Ascending aorta (tissue), 2 donors: ENCODE measurements at regions of chr16 and their contacts with region 1.

Region 1: GRCh38 chr16:87062569-87063442 is 254.4 kb downstream of the C16orf95 start:
- DNase-seq: peak in 1 of 2 donors; percentile 89
- H3K4me3 ChIP-seq: peak overlapping the region; percentile 11 to 66
- H3K27ac ChIP-seq: peak overlapping the region; percentile 86 to 90
- H3K4me1 ChIP-seq: peaks cover 0 to 14% of the 10 kb centered on the region in 2 donors
- H3K27me3 ChIP-seq: no peaks in the 10 kb centered on the region
- CTCF ChIP-seq: peak; percentile 86 to 91 (median 88)

Region 2: GRCh38 chr16:86563489-86564345 is 499.1 kb before region 1 on chr16:
- intact Hi-C with region 1: loop called (anchors 1 kb)
- DNase-seq: peak; percentile 70 to 97
- H3K4me3 ChIP-seq: peak overlapping the region; percentile 76 to 79
- H3K27ac ChIP-seq: peak overlapping the region; percentile 91 to 98
- H3K4me1 ChIP-seq: peaks cover 0 to 4% of the 10 kb centered on the region in 2 donors
- H3K27me3 ChIP-seq: no peaks in the 10 kb centered on the region
- CTCF ChIP-seq: peak; percentile 100

Region 3: GRCh38 chr16:86680162-86680561 is 382.6 kb before region 1 on chr16:
- intact Hi-C with region 1: loop called (anchors 5 kb)
- DNase-seq: peak in 1 of 2 donors; percentile 87
- H3K4me3 ChIP-seq: peak overlapping the region in 1 of 2 donors; percentile 57
- H3K27ac ChIP-seq: peak overlapping the region; percentile 93 to 94
- H3K4me1 ChIP-seq: peaks cover 3 to 44% of the 10 kb centered on the region in 2 donors
- H3K27me3 ChIP-seq: no peaks in the 10 kb centered on the region
- CTCF ChIP-seq: no peak

Region 4: DNA sequence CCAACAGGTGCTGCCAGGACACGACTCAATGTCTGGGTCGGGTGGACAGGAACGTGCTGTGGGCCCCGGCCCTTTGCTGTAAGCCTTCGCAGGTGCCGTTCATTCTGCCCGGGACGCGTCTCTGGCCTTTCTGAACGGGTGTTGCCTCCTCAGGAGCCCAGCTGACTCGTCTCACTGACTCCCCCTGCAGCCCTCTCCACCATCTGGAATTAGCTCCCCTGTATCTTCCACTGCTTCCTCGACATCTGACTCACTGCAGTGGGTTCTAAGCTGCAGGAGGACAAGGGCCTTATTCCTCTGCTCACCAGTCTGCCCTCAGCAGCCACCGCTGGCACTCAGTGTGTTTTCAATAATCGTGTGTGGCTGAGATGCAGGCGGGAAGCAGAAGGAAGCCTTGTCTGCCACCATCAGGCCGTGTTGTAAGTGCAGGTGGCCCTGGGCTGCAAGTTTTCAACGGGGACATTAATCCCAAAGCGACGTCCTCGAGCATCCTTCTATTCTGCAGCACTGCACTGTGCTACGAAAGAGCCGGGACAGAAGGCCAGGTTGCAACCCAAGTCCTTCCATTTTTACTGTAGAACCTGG is 228.3 kb before region 1 on chr16:
- intact Hi-C with region 1: loop called (anchors 2 kb)
- DNase-seq: no peak
- H3K4me3 ChIP-seq: no peak overlapping the region
- H3K27ac ChIP-seq: no peak overlapping the region
- H3K4me1 ChIP-seq: no peaks in the 10 kb centered on the region
- H3K27me3 ChIP-seq: no peaks in the 10 kb centered on the region
- CTCF ChIP-seq: peak in 2 of 3 experiments; percentile 16 to 33

Region 5: DNA sequence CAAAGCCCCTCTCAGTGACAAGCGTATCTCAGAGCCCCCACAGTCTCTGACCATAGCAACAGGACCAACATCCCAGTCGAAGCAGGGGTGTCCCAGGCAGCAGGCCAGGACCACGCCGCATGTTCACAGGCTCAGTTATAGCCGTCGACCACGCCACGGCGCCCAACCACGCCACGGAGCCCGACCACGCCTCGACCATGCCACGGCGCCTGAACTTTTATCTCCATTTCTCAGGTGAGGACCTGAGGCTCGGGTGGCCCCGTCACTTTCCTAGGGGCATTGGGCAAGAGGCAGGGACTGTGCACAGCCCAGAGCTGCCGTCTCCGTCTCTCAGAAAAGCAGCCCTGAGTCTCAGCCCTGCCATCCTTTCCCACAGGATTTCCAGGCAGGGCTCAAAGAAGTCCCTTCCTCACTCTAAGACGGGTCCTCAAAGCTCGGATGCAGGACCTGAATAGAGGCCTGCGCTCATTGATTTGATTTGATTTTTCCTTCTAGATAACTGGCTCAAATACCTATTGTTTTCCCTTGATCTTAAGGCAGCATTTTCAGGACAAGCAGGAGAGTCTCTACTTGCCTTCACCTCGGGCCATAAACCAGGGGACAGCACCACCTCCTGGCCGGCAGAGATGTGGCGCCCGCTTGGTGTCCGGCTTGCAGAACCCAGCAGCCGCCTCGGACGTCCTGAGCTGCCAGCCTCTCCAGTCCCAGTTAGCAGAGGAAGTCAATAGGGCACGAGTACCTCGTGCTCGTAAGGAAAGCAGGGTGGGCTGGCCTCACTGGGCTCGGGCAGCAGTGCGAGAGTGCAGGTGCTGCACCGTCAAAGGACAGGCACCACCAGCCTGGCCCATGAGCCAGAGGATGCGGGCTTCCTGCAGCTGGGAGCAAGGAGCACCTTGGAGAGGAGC is 215.6 kb after region 1 on chr16:
- intact Hi-C with region 1: loop called (anchors 2 kb)
- DNase-seq: peak in 1 of 2 donors; percentile 88
- H3K4me3 ChIP-seq: no peak overlapping the region
- H3K27ac ChIP-seq: no peak overlapping the region
- H3K4me1 ChIP-seq: no peaks in the 10 kb centered on the region
- H3K27me3 ChIP-seq: no peaks in the 10 kb centered on the region
- CTCF ChIP-seq: peak; percentile 86 to 92 (median 89)